ENCODE measurements at regions of chr4 and their contacts with region 1.

Region 1: DNA sequence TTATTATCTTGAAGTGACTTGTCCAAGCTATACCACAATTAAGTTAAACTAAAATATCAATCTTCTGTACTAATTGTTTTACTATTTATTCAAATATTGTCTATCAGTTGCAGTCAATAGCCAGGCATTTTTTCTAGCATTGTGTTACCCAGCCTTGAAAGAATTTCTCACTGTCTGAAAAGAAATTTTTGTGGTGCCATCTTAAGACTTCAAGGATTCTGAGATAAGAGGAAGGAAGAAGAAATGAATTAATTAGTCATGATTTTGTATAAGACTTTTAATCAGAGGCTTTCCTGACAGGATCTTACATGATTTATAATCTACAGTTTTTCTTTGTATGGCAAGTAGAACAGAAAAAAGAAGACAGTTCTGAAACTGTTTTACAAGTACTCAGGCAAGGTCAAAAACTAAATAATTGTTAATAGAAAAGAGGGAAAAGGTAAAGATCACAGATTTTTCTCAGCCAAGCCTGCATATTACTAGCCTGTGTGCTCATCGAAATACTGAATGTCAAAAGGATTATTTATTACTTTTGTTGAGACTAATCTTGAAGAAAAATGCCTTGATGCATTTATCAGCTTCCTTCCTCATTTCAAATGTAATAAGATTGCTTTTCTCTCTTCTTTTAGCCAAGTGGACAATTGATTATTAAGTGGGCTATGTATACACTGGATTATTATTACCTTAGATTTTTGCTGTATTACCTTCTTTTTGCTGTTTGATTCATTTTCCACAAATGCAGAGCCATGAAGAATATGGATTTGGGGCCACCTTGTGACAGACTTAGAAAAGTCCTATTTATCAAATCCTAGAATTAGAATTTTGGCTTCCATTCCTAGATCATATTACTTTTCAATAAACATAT is 53.8 kb downstream of the CXCL1 start:
- DNase-seq: no peak
- H3K4me3 ChIP-seq: no peak overlapping the region
- CTCF ChIP-seq: peak; percentile 21

Region 2: DNA sequence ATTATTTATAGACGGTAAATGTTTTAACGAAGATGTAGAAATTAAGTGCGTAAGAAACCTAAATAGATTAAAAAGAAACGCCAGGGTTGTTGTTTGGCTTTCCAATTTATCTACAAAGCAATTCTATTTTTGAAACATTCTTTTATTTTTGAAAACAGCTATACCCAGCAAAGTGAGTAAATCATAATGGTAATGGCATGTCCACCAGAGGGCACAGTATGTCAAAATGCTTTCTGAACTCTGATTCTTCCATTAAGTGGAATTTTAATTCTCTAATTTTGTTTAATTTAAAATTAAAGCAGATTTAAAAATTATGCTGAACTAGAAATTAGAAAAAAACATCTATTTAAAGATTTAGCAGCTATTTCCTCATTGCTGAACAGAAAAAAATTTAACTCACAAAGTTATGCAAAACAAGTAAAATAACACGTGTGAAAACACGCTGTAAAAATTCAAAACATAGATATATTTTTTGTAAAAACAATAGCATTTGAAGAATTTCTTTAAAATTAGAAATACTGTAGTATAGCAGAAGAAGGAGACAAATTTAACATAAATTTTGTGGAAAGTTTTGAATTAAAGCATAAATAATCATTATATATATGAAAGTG is 329.3 kb before region 1 on chr4:
- CTCF ChIA-PET with region 1: interaction called, 16 read pairs
- POLR2A ChIA-PET with region 1: no interaction called
- DNase-seq: no peak
- H3K4me3 ChIP-seq: no peak overlapping the region
- CTCF ChIP-seq: peak; percentile 36

Region 3: DNA sequence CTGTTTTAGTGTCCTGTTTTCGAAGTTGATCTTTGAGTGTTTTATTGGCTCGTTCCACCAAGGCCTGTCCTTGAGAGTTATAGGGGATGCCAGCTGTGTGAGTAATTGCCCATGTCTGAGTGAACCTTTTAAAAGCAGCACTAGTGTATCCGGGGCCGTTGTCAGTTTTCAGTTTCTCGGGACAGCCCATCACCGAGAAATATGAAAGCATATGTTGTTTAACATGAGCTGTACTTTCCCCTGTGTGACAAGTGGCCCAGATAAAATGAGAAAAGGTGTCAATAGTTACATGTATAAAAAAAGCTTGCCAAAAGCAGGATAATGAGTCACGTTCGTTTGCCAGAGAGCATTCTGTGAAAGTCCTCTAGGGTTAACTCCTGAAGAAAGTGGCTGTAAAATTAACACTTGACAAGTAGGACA is 254.2 kb before region 1 on chr4:
- CTCF ChIA-PET with region 1: interaction called, 215 read pairs
- POLR2A ChIA-PET with region 1: no interaction called
- DNase-seq: no peak
- H3K4me3 ChIP-seq: no peak overlapping the region
- CTCF ChIP-seq: no peak

Measured in AG04449 (cell line).